BJ (cell line): ENCODE measurements at regions of chr20 and their contacts with region 1.

Region 1: GRCh38 chr20:54103067-54103761 is 32.8 kb upstream of the BCAS1 start:
- DNase-seq: no peak
- H3K4me3 ChIP-seq: no peak overlapping the region
- H3K27me3 ChIP-seq: no peaks in the 10 kb centered on the region; the same call in 1 of the 2 replicates
- CTCF ChIP-seq: peak; percentile 93

Region 2: GRCh38 chr20:54090056-54090816 is 13.0 kb before region 1 on chr20:
- CTCF ChIA-PET with region 1: interaction called, 15 read pairs
- POLR2A ChIA-PET with region 1: no interaction called
- DNase-seq: no peak
- H3K4me3 ChIP-seq: no peak overlapping the region
- H3K27me3 ChIP-seq: no peaks in the 10 kb centered on the region; the same call in 1 of the 2 replicates
- CTCF ChIP-seq: no peak

Region 3: GRCh38 chr20:54168961-54169862 is 66.0 kb after region 1 on chr20:
- CTCF ChIA-PET with region 1: interaction called, 13 read pairs
- POLR2A ChIA-PET with region 1: no interaction called
- DNase-seq: no peak
- H3K4me3 ChIP-seq: no peak overlapping the region
- H3K27me3 ChIP-seq: peaks cover 16% of the 10 kb centered on the region
- CTCF ChIP-seq: no peak

Region 4: GRCh38 chr20:54199721-54200176 is 96.5 kb after region 1 on chr20:
- CTCF ChIA-PET with region 1: interaction called, 544 read pairs
- POLR2A ChIA-PET with region 1: no interaction called
- DNase-seq: no peak
- H3K4me3 ChIP-seq: no peak overlapping the region
- H3K27me3 ChIP-seq: peaks cover under 1% of the 10 kb centered on the region; the same call in 1 of the 2 replicates
- CTCF ChIP-seq: peak; percentile 96

Region 5: GRCh38 chr20:54207743-54208547 is 104.7 kb after region 1 on chr20 and contains the start of gene PFDN4:
- CTCF ChIA-PET with region 1: interaction called, 544 read pairs
- POLR2A ChIA-PET with region 1: no interaction called
- DNase-seq: no peak
- H3K4me3 ChIP-seq: peak within 1 kb of the TSS; percentile 82
- H3K27me3 ChIP-seq: peaks cover 2% of the 10 kb centered on the region; the same call in 1 of the 2 replicates
- CTCF ChIP-seq: peak; percentile 81
- polyA plus RNA-seq, gene PFDN4: 10.4 and 40.1 TPM in 2 replicates

Region 6: DNA sequence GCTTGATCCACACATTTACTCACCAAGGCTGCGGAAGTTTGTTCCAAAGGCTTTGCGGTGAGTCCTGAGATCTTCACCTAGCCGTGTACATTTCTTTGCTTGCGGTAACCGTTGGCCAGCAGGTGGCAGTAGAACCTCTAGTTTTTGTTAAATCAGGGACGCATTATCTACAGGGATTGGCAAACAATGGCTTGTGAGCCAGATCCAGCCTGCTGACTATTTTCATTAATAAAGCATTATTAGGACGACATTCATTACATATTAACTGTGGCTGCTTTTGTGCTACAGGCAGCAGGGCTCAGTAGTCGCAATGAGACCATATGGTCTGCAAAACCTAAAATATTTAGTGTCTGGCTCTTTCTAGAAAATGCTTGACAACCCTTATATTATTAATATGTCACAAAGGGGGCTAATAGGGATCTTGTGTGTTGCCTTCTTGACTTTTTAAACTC is 546.3 kb after region 1 on chr20:
- CTCF ChIA-PET with region 1: interaction called, 10 read pairs
- POLR2A ChIA-PET with region 1: no interaction called
- DNase-seq: peak; percentile 1
- H3K4me3 ChIP-seq: no peak overlapping the region
- H3K27me3 ChIP-seq: no peaks in the 10 kb centered on the region
- CTCF ChIP-seq: peak; percentile 89